Activated CD8-positive, alpha-beta memory T cell treated with anti-CD3 and anti-CD28 coated beads, Interleukin-2, amount 10 ng/mL, durations not matched to agents 7 days and 5 days (primary cell): ENCODE measurements at regions of chr17 and their contacts with region 1.

Region 1: DNA sequence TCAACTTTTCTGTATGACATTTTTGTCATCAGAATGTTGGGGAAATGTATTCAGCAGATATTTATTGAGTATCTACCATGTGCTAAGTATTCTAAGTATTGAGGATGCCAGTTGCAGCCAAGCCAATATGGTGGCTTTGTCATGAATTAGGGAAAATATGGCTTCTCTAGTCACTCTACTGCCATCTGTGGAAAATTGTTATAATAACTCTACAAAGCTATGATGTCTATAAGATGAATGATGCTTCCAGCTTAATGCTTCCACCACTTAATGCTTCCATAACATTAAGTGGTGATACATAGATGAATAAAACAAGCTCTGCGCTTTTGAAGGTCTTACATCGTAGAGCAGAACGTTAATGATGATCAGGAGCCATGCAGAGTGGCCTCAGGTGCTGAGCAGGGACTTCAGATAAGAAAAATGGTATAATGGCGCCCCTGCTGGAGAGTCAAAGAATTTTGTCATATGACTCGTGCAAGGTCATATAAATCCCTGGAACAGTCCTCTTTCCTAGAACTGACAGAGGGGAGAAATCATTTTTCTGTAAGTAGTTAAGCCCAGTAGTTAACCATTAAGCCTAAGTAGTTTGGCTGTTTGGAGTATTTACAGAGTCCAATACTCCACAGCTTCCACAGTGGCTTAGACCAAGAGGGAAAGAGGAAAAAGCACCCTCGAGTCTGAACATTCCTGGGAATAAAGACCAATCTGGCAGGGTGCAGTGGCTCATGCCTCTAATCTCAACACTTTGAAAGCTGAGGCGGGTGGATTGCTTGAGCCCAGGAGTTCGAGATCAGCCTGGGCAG is 2.7 kb upstream of the TMIGD1 start:
- DNase-seq: peak; percentile 74
- ATAC-seq: peak; percentile 56
- H3K4me3 Mint-ChIP-seq: no peak overlapping the region
- H3K27ac Mint-ChIP-seq: peak overlapping the region; percentile 44
- H3K4me1 Mint-ChIP-seq: peaks cover 41% of the 10 kb centered on the region
- H3K27me3 Mint-ChIP-seq: peaks cover 5% of the 10 kb centered on the region

Region 2: GRCh38 chr17:30116661-30117551 is 219.7 kb before region 1 on chr17 and contains the start of gene NSRP1:
- CTCF ChIA-PET with region 1: interaction called, 18 read pairs
- DNase-seq: peak; percentile 97
- ATAC-seq: peak; percentile 91
- H3K4me3 Mint-ChIP-seq: peak within 1 kb of the TSS; percentile 99
- H3K27ac Mint-ChIP-seq: peak within 1 kb of the TSS; percentile 99
- H3K4me1 Mint-ChIP-seq: peaks cover 62% of the 10 kb centered on the region
- H3K27me3 Mint-ChIP-seq: no peaks in the 10 kb centered on the region
- total RNA-seq, gene NSRP1: 24.0 to 30.9 TPM

Region 3: GRCh38 chr17:30291543-30292285 is 44.9 kb before region 1 on chr17 and contains the start of gene BLMH:
- CTCF ChIA-PET with region 1: interaction called, 34 read pairs
- DNase-seq: peak; percentile 88
- ATAC-seq: peak; percentile 92
- H3K4me3 Mint-ChIP-seq: peak within 1 kb of the TSS; percentile 98
- H3K27ac Mint-ChIP-seq: peak within 1 kb of the TSS; percentile 90
- H3K4me1 Mint-ChIP-seq: peaks cover 22% of the 10 kb centered on the region
- H3K27me3 Mint-ChIP-seq: no peaks in the 10 kb centered on the region
- total RNA-seq, gene BLMH: 68.0 to 70.5 TPM

Region 4: GRCh38 chr17:30309591-30309990 is 27.0 kb before region 1 on chr17:
- CTCF ChIA-PET with region 1: interaction called, 10 read pairs
- DNase-seq: no peak
- ATAC-seq: no peak
- H3K4me3 Mint-ChIP-seq: no peak overlapping the region
- H3K27ac Mint-ChIP-seq: no peak overlapping the region
- H3K4me1 Mint-ChIP-seq: no peaks in the 10 kb centered on the region
- H3K27me3 Mint-ChIP-seq: peaks cover 6% of the 10 kb centered on the region

Region 5: GRCh38 chr17:30363715-30364202 is 27.2 kb after region 1 on chr17:
- CTCF ChIA-PET with region 1: interaction called, 18 read pairs
- DNase-seq: peak; percentile 95
- ATAC-seq: peak; percentile 89
- H3K4me3 Mint-ChIP-seq: peak overlapping the region; percentile 29
- H3K27ac Mint-ChIP-seq: peak overlapping the region; percentile 92
- H3K4me1 Mint-ChIP-seq: peaks cover 27% of the 10 kb centered on the region
- H3K27me3 Mint-ChIP-seq: peaks cover 7% of the 10 kb centered on the region

Region 6: DNA sequence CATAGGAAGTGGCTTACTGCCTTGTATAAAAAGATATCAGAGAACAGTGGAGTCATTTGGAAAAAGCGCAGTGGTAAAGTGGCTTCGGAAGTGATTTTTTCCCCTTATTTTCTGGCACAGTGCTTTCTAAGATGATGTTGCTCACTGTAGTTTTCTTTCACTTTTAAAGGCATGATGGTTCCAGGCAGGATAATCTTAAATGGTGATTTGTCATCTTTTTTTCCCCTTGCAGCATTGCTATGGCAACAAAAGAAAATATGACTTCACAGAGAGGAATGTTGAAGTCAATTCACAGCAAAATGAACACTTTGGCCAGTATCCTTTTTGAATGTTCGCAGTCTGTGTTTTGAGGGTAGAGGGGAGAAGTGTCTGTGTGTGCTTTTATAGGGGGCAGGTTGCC is 183.1 kb after region 1 on chr17:
- CTCF ChIA-PET with region 1: no interaction called
- DNase-seq: no peak
- ATAC-seq: no peak
- H3K4me3 Mint-ChIP-seq: no peak overlapping the region
- H3K27ac Mint-ChIP-seq: no peak overlapping the region
- H3K4me1 Mint-ChIP-seq: peaks cover 10% of the 10 kb centered on the region
- H3K27me3 Mint-ChIP-seq: no peaks in the 10 kb centered on the region

Region 7: DNA sequence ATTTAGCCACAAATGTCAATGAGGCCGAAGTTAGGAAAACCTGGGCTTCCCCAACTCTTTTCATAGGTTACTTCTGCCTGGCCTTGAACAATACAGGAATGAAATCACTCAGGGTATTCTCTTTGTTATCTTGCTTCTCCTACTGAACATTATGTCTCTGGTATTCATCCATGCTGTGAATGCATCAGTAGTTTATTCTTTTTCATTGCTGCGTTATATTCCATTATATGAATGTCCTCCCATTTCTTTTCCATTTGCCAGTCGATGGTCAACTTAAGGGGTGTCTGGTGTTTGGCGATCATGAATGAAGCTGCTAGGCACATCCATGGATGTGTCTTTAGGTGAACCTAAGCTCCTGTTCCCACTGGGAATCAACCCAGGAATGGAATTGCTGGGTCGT is 359.7 kb after region 1 on chr17:
- CTCF ChIA-PET with region 1: no interaction called
- DNase-seq: no peak
- ATAC-seq: no peak
- H3K4me3 Mint-ChIP-seq: no peak overlapping the region
- H3K27ac Mint-ChIP-seq: no peak overlapping the region
- H3K4me1 Mint-ChIP-seq: peaks cover 15% of the 10 kb centered on the region
- H3K27me3 Mint-ChIP-seq: peaks cover 20% of the 10 kb centered on the region